ENCODE measurements at regions of chr10 and their contacts with region 1.

Region 1: GRCh38 chr10:60555700-60556099 is 166.0 kb upstream of the ANK3 start:
- DNase-seq: no peak
- ATAC-seq: no peak
- H3K4me3 Mint-ChIP-seq: no peak overlapping the region
- H3K27ac Mint-ChIP-seq: no peak overlapping the region
- H3K4me1 Mint-ChIP-seq: peaks cover 18% of the 10 kb centered on the region
- H3K27me3 Mint-ChIP-seq: no peaks in the 10 kb centered on the region

Region 2: GRCh38 chr10:60629332-60629731 is 73.6 kb after region 1 on chr10:
- CTCF ChIA-PET with region 1: no interaction called
- POLR2A ChIA-PET with region 1: no interaction called
- intact Hi-C with region 1: loop called in 1 of 2 experiments (anchors 5 kb)
- DNase-seq: no peak
- ATAC-seq: no peak
- H3K4me3 Mint-ChIP-seq: no peak overlapping the region
- H3K27ac Mint-ChIP-seq: no peak overlapping the region
- H3K4me1 Mint-ChIP-seq: peaks cover 16% of the 10 kb centered on the region
- H3K27me3 Mint-ChIP-seq: no peaks in the 10 kb centered on the region

Region 3: DNA sequence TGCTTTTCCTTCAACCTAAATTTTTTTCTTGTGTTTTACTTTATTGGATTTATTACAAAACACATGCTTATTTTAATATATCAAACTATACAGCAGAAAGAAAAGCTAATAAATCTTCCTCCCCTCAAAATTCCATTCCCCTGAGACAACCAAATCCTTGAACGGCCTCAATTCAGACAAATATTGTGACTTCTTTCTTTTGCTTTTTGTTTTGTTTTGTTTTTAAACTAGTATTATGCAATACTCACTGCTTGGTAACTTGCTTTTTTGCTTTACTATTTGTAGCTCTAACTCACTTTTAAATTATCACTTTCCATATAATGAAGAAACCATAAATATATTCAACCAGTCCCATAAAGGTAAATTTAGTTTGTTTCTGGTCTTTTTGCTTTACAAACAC is 163.2 kb after region 1 on chr10:
- CTCF ChIA-PET with region 1: no interaction called
- POLR2A ChIA-PET with region 1: no interaction called
- intact Hi-C with region 1: no loop called
- DNase-seq: no peak
- ATAC-seq: no peak
- H3K4me3 Mint-ChIP-seq: no peak overlapping the region
- H3K27ac Mint-ChIP-seq: no peak overlapping the region
- H3K4me1 Mint-ChIP-seq: peaks cover 62% of the 10 kb centered on the region
- H3K27me3 Mint-ChIP-seq: no peaks in the 10 kb centered on the region

Region 4: DNA sequence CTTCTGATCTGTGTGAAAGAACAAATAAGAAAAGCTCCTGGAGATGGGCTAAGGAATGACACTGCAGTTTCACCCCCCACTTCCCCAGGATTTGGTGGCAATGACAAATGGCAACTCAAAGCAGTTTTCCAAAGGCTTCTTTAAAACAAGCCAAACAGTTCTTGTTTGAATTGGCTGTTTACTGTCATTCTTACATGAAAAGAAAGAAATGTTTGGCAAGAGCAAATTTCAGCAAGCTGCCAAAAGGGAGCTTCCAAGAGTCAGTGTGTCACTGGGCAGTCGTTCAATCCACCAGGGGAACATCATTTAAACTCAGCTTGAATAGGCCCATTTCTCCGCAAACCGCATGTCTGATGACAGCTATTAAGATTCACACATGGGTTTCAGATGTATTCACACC is 507.3 kb after region 1 on chr10:
- CTCF ChIA-PET with region 1: no interaction called
- POLR2A ChIA-PET with region 1: no interaction called
- intact Hi-C with region 1: no loop called
- DNase-seq: no peak
- ATAC-seq: no peak
- H3K4me3 Mint-ChIP-seq: no peak overlapping the region
- H3K27ac Mint-ChIP-seq: no peak overlapping the region
- H3K4me1 Mint-ChIP-seq: no peaks in the 10 kb centered on the region
- H3K27me3 Mint-ChIP-seq: peaks cover 3% of the 10 kb centered on the region

Measured in activated CD4-positive, alpha-beta T cell treated with anti-CD3 and anti-CD28 coated beads for 36 hours (primary cell).